ENCODE measurements at regions of chr4 and their contacts with region 1.

Region 1: DNA sequence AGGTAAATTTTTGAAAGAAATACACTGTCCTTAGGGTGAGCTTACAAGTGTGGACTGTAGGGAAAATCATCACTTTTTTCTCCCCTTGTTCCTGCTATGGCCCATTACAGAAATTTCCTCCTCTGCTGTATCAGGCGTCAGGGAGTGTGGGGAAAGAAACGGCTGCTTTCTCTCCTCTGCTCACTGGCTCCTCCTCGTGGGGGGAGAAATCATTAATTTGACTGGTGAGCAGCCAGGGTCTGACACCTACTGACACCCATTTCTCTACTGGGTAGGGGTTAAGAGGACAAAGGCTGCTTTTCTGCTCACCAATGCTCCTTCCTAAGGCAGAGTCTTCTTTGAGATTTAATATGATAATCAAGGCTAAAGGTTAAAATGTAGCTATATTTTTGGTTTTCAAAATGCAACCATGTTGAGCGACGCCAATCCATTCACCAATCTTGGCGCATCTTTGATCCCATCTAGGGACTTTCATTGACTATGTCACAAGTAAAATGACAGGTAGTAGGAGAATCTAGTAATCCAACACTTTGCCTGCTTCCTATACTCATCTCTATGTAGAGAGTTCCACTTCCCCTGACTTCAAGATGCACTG is 25.1 kb downstream of the SETD7 start:
- DNase-seq: peak; percentile 20
- H3K4me3 Mint-ChIP-seq: no peak overlapping the region
- H3K27ac Mint-ChIP-seq: peak overlapping the region; percentile 37
- H3K4me1 Mint-ChIP-seq: peaks cover 6% of the 10 kb centered on the region
- H3K27me3 Mint-ChIP-seq: no peaks in the 10 kb centered on the region

Region 2: DNA sequence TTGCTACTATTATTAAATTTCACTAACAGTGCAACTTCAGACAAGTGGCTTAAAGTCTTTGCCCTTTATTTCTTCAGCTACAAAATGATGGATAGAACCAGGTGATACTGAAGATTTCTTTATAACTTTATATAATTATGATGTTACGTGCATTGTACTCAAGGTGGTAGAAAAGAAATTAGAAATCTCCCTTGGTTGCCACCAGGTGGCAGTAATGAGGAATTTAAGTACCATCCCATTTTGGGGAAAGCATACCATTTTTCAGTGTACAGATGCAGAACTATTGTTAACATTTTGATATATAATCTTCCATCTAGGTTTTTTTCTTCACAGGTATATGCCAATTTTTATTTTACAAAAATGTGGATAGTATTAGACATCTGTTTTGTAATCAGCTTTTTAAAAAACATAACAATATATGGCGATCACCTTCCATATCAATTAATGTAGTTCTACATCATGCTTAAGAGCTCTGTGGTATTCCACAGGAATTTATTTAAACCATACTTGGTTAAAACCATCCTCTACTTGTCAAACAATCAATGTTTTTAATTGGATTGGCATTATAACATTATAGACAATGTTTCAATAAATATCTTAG is 114.8 kb before region 1 on chr4:
- intact Hi-C with region 1: loop called (anchors 1 kb)
- DNase-seq: peak; percentile 3
- H3K4me3 Mint-ChIP-seq: no peak overlapping the region
- H3K27ac Mint-ChIP-seq: no peak overlapping the region
- H3K4me1 Mint-ChIP-seq: peaks cover 27% of the 10 kb centered on the region
- H3K27me3 Mint-ChIP-seq: no peaks in the 10 kb centered on the region

Region 3: DNA sequence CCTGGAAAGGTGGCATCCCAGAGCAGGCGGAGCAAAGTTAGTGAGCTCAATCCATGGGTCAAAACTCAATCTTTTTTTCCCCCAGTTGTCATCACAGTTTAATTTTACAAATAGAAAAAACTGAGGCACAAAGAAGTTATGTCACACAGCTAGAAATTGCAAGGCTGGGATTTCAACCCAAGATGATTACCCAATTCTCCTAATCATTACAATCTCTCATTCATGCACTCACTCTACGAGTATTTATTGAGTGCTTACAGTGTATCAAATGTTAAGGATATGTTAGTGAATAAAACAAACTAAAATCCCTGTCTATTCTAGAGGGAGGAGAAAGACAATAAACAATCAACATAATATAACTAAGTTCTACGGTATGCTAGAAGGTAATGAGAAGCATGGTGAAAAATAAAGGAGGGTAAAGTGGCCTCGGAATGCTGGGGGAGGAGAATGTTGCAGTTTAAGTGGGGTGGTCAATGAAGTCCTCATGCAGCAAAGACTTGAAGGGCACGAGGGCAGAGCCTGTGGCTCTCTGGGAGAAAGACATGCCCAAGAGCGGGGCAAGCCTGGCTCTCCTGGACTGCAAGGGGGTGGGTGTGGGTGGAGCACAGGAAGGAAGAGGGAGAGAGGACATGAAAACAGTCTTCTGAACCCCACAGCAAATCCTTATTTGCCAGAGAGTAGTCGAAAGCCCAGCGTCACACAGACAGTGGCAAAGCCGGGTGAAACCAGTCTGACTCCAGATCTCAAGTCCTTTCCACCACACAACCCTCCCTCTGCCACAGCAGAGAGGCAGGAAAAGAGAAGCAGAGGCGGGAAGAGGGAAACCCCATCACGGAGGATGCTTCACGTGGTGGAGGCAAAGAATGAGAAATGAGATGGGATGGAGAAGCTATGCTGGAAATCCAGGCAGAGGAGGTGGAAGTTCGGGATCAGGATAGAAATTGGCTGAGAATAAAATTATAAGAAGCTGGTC is 28.7 kb before region 1 on chr4:
- intact Hi-C with region 1: loop called (anchors 2 kb)
- DNase-seq: no peak
- H3K4me3 Mint-ChIP-seq: no peak overlapping the region
- H3K27ac Mint-ChIP-seq: no peak overlapping the region
- H3K4me1 Mint-ChIP-seq: no peaks in the 10 kb centered on the region
- H3K27me3 Mint-ChIP-seq: no peaks in the 10 kb centered on the region

Region 4: DNA sequence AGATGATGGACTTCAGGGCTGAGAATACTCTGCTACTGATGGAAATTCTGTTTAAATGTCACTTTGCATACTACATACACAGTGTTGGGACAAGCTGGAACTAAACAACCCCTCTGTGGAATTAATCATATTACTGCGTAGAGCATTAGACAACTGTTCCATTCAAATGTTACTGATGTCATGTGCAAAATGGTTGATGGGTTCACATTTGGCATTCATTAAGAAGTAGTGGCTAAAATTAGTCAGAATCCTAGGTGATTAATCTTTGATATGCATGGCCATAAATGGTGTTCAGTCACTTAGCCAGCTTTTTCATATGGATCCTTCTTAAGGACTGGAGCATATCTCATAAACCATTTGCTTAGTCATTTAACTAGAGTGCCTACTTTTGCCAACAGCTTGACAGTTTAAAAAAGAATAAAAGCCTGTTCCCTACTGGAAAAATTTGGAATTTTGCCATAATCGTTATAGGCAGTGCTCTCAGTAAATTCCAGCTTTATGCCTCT is 1497.1 kb after region 1 on chr4:
- intact Hi-C with region 1: no loop called
- DNase-seq: no peak
- H3K4me3 Mint-ChIP-seq: no peak overlapping the region
- H3K27ac Mint-ChIP-seq: no peak overlapping the region
- H3K4me1 Mint-ChIP-seq: no peaks in the 10 kb centered on the region
- H3K27me3 Mint-ChIP-seq: peaks cover 1% of the 10 kb centered on the region